Endothelial cell of umbilical vein (primary cell): ENCODE measurements at regions of chr10 and their contacts with region 1.

Region 1: GRCh38 chr10:30791197-30791611 is 161.7 kb upstream of the LYZL2 start:
- DNase-seq: peak; percentile 85
- H3K4me3 ChIP-seq: no peak overlapping the region
- H3K27ac ChIP-seq: peak overlapping the region; percentile 15
- H3K4me1 ChIP-seq: peaks cover 30% of the 10 kb centered on the region
- H3K27me3 ChIP-seq: no peaks in the 10 kb centered on the region
- CTCF ChIP-seq: no peak
- POLR2A ChIP-seq: no peak

Region 2: DNA sequence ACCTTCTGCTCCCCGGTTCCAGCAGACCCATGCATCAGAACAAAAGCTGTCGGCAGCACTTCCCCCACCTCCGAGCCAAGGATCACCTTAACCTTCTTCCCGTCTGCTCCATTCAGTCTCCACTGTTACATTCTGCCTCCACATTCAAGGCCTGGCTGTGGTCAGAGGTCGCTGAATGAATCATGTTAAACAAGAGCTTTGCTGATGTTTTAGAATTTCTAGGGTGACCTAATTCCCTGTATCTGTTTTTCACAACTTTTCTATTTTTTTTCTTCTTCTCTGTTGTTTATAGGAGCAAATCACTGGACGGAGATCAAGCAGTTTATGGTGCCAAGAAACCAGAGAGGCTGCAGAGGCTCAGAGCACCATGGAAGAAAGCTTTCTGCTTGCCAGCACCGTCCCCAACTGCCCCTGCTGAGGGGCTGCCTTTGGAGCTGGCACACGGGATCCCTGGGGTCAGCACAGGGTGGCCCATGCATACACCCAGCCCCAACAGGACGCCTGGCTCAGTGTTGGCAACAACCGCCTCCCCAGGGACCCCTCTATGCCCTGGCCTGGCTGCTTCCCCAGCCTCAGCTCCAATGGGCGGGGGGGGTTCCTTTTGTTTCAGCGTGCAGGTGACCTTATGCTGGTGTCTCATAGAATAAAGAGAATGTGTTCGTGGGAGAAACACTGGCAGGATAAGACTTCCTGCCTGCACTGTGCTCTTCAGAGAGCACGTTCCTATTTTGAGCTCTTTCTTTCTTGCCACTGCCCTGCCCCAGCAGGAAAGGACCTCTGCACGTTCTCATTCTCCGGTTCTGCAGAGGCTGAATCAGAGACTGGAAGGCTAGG is 21.0 kb after region 1 on chr10:
- CTCF ChIA-PET with region 1: interaction called, 44 read pairs
- POLR2A ChIA-PET with region 1: interaction called, 5 read pairs
- dilution Hi-C with region 1: no loop called
- intact Hi-C with region 1: loop called (anchors 1 kb)
- DNase-seq: peak; percentile 96
- H3K4me3 ChIP-seq: no peak overlapping the region
- H3K27ac ChIP-seq: peak overlapping the region; percentile 96
- H3K4me1 ChIP-seq: peaks cover 54% of the 10 kb centered on the region
- H3K27me3 ChIP-seq: no peaks in the 10 kb centered on the region
- CTCF ChIP-seq: no peak
- POLR2A ChIP-seq: peak; percentile 29

Region 3: DNA sequence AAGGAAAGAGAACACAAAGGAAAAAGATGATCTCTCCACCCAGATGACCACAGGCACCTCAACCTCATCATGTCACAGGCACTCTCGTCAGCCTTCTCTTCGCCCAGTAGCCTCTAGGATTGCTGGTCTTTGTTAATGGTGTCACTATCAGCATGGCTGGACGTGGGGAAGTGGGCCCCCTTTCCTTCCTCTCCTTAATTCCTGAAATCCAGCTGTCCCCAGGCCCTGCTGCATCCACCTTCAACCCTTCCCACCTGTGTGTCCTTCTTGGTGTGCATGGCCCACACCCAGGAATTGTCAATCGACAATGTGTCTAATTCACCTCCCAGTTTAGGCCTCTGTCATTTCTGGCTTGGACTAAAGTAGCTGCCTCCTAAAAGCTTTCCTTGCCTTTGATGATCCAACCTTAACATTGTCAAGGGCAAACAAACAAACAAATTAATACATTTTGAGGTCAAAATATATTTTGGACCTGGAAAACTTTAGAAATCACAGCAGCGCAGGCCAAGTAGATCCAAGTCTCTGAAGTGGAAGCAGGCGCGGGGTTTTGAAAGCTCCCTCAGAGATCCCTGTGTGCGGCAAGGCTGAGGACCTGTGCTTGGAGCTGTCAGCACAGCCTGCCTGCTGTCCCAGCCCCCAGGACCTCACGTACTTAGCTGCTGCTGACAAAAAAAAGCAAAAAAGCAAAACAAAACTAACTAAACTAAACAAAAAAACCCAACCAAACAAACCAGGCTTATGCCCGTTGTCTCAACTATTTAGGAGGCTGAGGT is 31.7 kb after region 1 on chr10:
- CTCF ChIA-PET with region 1: no interaction called
- POLR2A ChIA-PET with region 1: no interaction called
- dilution Hi-C with region 1: no loop called
- intact Hi-C with region 1: no loop called
- DNase-seq: no peak
- H3K4me3 ChIP-seq: no peak overlapping the region
- H3K27ac ChIP-seq: no peak overlapping the region
- H3K4me1 ChIP-seq: peaks cover 36% of the 10 kb centered on the region
- H3K27me3 ChIP-seq: no peaks in the 10 kb centered on the region
- CTCF ChIP-seq: no peak
- POLR2A ChIP-seq: no peak